OCI-LY7 (cell line): ENCODE measurements at regions of chr15 and their contacts with region 1.

Region 1: GRCh38 chr15:100468285-100468684 is 60.5 kb downstream of the CERS3 start:
- DNase-seq: no peak
- H3K4me3 ChIP-seq: no peak overlapping the region
- H3K27ac ChIP-seq: no peak overlapping the region
- H3K4me1 ChIP-seq: peaks cover 20% of the 10 kb centered on the region
- CTCF ChIP-seq: no peak

Region 2: GRCh38 chr15:100349696-100350433 is 118.4 kb before region 1 on chr15:
- CTCF ChIA-PET with region 1: no interaction called
- POLR2A ChIA-PET with region 1: no interaction called
- intact Hi-C with region 1: loop called (anchors 10 kb)
- DNase-seq: peak; percentile 72
- H3K4me3 ChIP-seq: peak overlapping the region; percentile 61
- H3K27ac ChIP-seq: no peak overlapping the region
- H3K4me1 ChIP-seq: peaks cover 3% of the 10 kb centered on the region
- CTCF ChIP-seq: peak; percentile 76

Region 3: GRCh38 chr15:100383302-100384107 is 84.8 kb before region 1 on chr15:
- CTCF ChIA-PET with region 1: no interaction called
- POLR2A ChIA-PET with region 1: no interaction called
- intact Hi-C with region 1: no loop called
- DNase-seq: peak; percentile 17
- H3K4me3 ChIP-seq: no peak overlapping the region
- H3K27ac ChIP-seq: no peak overlapping the region
- H3K4me1 ChIP-seq: no peaks in the 10 kb centered on the region
- CTCF ChIP-seq: peak; percentile 66